ENCODE measurements at regions of chr11 and their contacts with region 1.

Region 1: DNA sequence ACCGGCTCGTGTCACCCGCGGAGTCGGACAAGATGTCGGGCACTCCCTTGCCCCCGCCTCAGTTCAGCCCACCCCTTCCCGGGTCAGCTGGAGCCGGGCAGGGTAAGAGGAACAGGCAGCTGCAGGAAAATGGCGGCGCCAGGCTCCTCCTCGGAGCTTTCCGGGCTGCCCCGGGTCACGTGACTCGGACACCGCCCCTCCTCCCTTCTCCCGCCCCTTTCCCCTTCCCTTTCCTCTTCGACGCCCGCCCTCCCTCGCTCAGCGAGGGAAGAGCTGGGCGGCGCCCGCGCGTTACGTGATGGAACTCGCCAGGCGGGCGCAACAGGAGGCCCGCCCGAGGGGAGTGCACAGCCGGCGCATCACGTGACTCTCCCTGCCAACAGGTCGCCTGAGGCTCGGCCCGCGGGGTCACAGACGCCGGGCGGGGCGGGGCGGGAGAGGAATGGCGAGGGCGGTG is at the start of gene PICALM:
- DNase-seq: peak; percentile 91 to 97 (median 94)
- ATAC-seq: peak; percentile 86 to 87
- H3K4me3 Mint-ChIP-seq: peak within 1 kb of the TSS; percentile 96 to 100 (median 98)
- H3K27ac Mint-ChIP-seq: peak within 1 kb of the TSS; percentile 87 to 98 (median 96)
- H3K4me1 Mint-ChIP-seq: peaks cover 21 to 45% (median 37%) of the 10 kb centered on the region in 4 donors
- H3K27me3 Mint-ChIP-seq: no peaks in the 10 kb centered on the region
- polyA plus RNA-seq, gene PICALM: 10.4 to 12.0 (median 11.8) TPM

Region 2: DNA sequence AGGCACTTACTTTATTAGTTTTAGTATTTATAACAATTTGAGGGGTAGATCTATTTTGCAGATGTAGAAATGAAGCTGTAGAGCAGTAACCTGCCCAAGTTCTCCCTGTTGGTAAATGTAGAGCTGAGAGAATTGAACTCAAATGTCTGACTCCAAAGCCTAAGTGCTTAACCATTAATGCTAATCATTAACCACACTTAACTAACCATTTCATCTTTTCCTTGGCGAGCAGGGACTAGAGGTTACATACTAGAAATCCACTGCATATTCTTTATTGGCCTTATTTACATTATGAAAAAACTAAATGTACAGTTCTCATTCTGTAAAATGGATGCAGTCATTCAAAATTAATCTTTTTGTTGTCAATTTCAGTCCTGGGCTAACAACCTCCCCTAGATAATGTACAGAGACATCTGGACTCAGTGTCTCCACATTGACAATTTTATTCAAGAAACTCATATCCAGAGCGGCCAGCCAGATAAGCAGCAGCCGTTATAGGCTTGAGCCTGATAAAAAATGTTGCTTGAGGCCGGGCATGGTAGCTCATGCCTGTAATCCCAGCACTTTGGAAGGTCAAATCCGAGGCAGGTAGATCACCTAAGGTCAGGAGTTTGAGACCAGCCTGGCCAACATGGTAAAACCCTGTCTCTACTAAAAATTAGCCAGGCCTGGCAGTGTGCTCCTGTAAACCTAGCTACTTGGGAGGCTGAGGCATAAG is 76.6 kb after region 1 on chr11:
- POLR2A ChIA-PET with region 1: no interaction called
- DNase-seq: no peak
- ATAC-seq: no peak
- H3K4me3 Mint-ChIP-seq: no peak overlapping the region
- H3K27ac Mint-ChIP-seq: no peak overlapping the region
- H3K4me1 Mint-ChIP-seq: peaks cover 6 to 53% (median 14%) of the 10 kb centered on the region in 4 donors
- H3K27me3 Mint-ChIP-seq: peaks cover 0 to 6% (median 0%) of the 10 kb centered on the region in 5 donors

Region 3: GRCh38 chr11:86193297-86194095 is 124.5 kb after region 1 on chr11:
- POLR2A ChIA-PET with region 1: interaction called, 18 read pairs
- DNase-seq: peak; percentile 16 to 82 (median 60)
- ATAC-seq: peak; percentile 99 to 100
- H3K4me3 Mint-ChIP-seq: peak overlapping the region; percentile 74 to 95 (median 90)
- H3K27ac Mint-ChIP-seq: peak overlapping the region; percentile 39 to 89 (median 82)
- H3K4me1 Mint-ChIP-seq: peaks cover 6 to 22% (median 13%) of the 10 kb centered on the region in 4 donors
- H3K27me3 Mint-ChIP-seq: peaks cover 0 to 2% (median 0%) of the 10 kb centered on the region in 5 donors

Region 4: GRCh38 chr11:86302100-86302793 is 233.3 kb after region 1 on chr11 and contains the start of gene HIKESHI:
- POLR2A ChIA-PET with region 1: interaction called, 16 read pairs
- DNase-seq: peak; percentile 75 to 95 (median 84)
- ATAC-seq: peak; percentile 99
- H3K4me3 Mint-ChIP-seq: peak within 1 kb of the TSS; percentile 97 to 100 (median 99)
- H3K27ac Mint-ChIP-seq: peak within 1 kb of the TSS; percentile 94 to 99 (median 98)
- H3K4me1 Mint-ChIP-seq: peaks cover 9 to 39% (median 28%) of the 10 kb centered on the region in 4 donors
- H3K27me3 Mint-ChIP-seq: peaks cover 0 to 2% (median 0%) of the 10 kb centered on the region in 5 donors
- polyA plus RNA-seq, gene HIKESHI: 86.4 to 96.0 (median 94.3) TPM

Measured in naive thymus-derived CD8-positive, alpha-beta T cell (primary cell).